T-cell (primary cell): ENCODE measurements at regions of chr1 and their contacts with region 1.

Region 1: DNA sequence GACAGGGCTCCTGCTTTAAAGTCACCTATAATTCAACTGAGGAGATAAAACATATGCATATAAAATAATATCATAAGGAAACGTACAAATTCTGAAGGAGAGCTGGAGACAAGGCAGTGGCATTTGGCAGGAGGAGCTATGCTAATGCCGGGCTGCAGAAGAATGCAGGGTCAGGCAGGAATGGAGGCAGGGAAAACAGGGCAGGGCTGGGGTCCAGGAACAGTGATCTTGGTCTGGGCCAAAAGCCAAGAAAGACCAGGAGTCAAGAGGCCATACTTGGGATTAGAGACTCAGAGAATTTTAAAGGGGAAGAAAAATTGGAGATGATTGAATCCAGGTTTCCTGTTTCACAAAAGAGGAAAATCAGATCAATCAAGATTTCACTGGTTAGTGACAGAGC is 20.0 kb upstream of the BRDT start:
- DNase-seq: no peak
- ATAC-seq: no peak
- H3K4me3 ChIP-seq: no peak overlapping the region
- H3K4me3 Mint-ChIP-seq: no peak overlapping the region
- H3K27ac ChIP-seq: no peak overlapping the region
- H3K27ac Mint-ChIP-seq: no peak overlapping the region
- H3K4me1 ChIP-seq: peaks cover 0 to 3% of the 10 kb centered on the region in 2 experiments
- H3K4me1 Mint-ChIP-seq: peaks cover 0 to under 1% (median 0%) of the 10 kb centered on the region in 3 donors
- H3K27me3 ChIP-seq: no peaks in the 10 kb centered on the region
- H3K27me3 Mint-ChIP-seq: no peaks in the 10 kb centered on the region

Region 2: DNA sequence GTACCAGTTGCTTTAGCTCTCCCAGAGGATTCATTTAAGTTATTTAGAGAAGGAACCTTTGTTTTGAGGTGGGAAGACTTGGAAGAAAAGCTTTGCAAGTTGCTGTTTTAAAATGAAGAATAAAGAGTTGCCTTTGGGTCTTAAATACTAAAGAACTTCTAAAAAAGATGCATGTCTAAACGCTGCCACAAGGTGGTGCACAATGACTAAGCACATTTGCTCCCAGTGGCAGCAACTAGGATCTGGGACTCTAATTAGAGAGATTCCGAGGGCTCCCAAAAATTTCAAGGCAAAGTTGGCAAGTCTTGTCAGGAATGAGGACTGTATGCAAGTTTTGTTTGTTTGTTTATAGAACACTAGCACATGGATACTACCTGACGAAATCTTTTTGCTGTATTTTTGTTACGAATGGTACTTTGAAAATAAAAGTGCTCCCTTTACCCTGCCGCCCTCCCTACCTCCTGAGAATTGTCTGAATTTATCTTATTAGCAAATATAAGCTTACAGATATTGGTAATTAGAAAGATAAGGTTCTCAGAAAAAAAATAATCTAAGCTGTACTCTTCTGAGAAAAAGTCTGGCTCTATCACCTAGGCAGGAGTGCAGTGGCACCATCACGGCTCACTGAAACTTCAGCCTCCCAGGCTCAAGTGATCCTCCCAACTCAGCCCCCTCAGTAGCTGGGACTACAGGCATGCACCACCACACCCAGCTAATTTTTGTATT is 646.4 kb before region 1 on chr1:
- CTCF ChIA-PET with region 1: interaction called, 4 to 14 read pairs
- POLR2A ChIA-PET with region 1: no interaction called
- DNase-seq: peak in 23 of 35 experiments; percentile 2 to 68 (median 16)
- ATAC-seq: peak in 1 of 4 experiments; percentile 45
- H3K4me3 ChIP-seq: no peak overlapping the region
- H3K4me3 Mint-ChIP-seq: no peak overlapping the region
- H3K27ac ChIP-seq: no peak overlapping the region
- H3K27ac Mint-ChIP-seq: peak overlapping the region in 1 of 2 donors; percentile 36
- H3K4me1 ChIP-seq: no peaks in the 10 kb centered on the region
- H3K4me1 Mint-ChIP-seq: no peaks in the 10 kb centered on the region
- H3K27me3 ChIP-seq: no peaks in the 10 kb centered on the region
- H3K27me3 Mint-ChIP-seq: peaks cover 3 to 7% of the 10 kb centered on the region in 2 donors

Region 3: GRCh38 chr1:91913018-91913417 is 16.2 kb before region 1 on chr1:
- CTCF ChIA-PET with region 1: no interaction called
- POLR2A ChIA-PET with region 1: no interaction called
- DNase-seq: no peak
- ATAC-seq: no peak
- H3K4me3 ChIP-seq: no peak overlapping the region
- H3K4me3 Mint-ChIP-seq: no peak overlapping the region
- H3K27ac ChIP-seq: no peak overlapping the region
- H3K27ac Mint-ChIP-seq: no peak overlapping the region
- H3K4me1 ChIP-seq: no peaks in the 10 kb centered on the region
- H3K4me1 Mint-ChIP-seq: no peaks in the 10 kb centered on the region
- H3K27me3 ChIP-seq: peaks cover 0 to 2% of the 10 kb centered on the region in 2 experiments
- H3K27me3 Mint-ChIP-seq: no peaks in the 10 kb centered on the region